ENCODE measurements at regions of chr2 and their contacts with region 1.

Region 1: DNA sequence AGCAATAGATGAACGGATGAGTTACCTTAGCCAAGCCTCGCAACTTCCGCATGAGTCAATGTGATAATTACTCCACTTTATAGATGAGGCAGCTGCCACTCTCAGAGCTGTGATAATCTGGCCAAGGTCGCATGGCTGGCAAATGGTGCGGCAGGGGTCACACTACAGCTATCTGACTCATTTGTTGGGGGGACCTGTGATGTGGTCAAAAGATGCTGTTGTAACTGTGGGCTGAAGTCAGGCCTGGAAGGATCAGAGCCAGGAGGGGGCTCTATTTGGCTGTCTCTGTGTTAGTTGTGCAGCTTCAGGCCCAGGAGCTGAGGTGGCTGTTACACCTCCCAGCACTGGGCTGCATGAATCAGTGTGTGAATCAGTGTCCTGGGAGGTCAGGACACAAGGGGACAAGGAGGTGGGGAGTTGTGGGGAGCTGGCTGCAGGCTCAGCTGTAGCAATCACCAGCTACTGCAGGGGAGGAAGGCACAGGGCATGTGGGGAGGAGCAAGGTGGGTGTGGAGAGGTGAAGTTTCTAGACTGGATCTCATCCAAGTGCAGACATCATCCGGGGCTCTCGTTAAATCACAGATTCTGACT is 33.1 kb downstream of the NGEF start:
- DNase-seq: peak; percentile 84
- ATAC-seq: peak; percentile 93
- H3K4me3 ChIP-seq: no peak overlapping the region
- H3K27ac ChIP-seq: peak overlapping the region; percentile 80
- H3K4me1 ChIP-seq: peaks cover 58% of the 10 kb centered on the region
- H3K27me3 ChIP-seq: no peaks in the 10 kb centered on the region
- CTCF ChIP-seq: no peak; the same call in 1 of the 2 replicates

Region 2: DNA sequence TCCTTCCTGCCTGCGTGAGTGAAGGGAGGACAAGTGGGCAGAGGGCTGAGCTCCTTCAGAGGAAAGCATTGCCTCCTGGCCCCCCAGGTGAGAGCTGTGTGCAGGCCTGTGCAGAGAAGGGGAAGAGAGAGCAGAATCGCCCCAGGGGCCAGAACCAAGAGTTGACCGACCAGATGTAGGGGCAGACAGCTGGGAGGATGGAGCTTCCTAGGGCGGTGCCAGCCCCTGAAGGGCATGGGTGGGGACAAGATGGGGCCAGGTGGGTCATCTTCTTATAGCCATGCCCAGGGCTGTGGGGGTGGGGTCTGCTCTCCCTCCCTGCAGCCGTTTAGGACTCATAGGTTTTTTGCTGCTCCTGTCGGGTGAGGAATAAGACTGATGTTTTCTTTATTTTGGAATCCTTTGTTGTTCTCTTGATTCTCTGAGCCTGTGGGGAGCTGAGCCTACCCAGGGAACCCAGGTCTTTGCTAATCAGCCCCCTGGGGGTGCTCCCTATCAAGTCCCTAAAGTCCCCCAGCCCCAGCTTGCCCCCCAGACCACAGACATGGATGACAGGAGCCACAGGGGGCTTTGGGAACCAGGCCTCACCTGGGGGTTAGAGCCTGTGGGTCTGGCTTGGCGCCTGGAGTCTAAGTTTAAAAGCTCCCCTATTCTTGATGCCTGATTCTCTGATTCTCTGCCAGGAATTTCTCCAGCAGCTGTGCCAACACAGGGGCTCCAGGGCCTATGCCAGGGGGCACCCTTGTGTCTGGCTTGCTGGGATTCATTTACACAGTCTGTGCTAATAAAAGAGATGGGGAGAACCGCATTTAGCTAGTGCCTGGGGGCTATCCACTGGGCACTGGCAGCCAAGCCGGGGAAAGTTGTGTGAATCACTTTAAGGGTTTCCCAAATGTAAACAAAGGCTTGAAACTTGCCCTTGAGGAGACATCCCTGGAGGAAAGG is 355.9 kb before region 1 on chr2:
- CTCF ChIA-PET with region 1: no interaction called
- POLR2A ChIA-PET with region 1: no interaction called
- in situ Hi-C with region 1: no loop called
- intact Hi-C with region 1: no loop called
- DNase-seq: no peak
- ATAC-seq: peak; percentile 87
- H3K4me3 ChIP-seq: no peak overlapping the region
- H3K27ac ChIP-seq: peak overlapping the region; percentile 52
- H3K4me1 ChIP-seq: peaks cover 23% of the 10 kb centered on the region
- H3K27me3 ChIP-seq: no peaks in the 10 kb centered on the region; the same call in 1 of the 2 replicates
- CTCF ChIP-seq: no peak

Region 3: DNA sequence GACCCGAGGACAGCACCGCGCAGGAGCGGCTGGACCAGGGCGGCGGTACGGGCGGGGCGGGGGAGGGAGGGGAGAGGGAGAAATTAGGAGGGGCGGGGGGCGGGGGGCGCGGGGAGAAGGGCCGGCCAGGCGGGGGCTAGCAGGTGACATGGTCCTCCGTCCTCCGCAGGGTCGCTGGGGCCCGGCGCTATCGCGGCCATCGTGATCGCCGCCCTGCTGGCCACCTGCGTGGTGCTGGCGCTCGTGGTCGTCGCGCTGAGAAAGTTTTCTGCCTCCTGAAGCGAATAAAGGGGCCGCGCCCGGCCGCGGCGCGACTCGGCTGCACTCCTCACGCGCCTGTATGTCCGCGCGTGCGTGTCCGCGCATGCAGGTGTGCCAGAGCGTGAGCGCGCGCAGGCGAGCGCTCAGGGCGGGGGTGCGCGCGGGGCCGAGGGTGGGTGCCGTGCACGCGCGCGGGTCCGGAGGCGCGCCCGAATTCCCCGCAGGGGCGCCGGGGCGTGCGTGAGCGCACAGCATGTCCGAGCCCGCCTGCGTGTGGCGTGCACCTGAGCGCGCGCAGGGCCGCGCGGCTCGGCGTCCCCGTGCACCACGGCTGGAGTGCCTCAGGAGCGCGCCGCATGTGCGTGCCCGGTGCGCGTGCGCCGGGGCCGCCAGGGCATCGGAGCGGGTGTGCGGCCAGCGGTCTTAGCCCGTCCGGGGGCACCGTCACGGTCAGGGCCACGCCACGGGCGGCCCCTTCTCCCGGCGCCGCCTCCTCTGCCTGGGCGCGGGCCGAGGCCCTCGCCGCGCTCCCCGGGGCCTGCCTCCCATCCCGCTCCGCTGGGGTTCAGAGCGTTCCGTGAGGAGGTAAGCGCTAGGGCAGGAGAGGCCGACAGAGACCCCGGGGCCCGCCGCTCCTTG is 103.6 kb before region 1 on chr2:
- CTCF ChIA-PET with region 1: no interaction called
- POLR2A ChIA-PET with region 1: no interaction called
- in situ Hi-C with region 1: no loop called
- intact Hi-C with region 1: no loop called
- DNase-seq: no peak
- ATAC-seq: peak; percentile 81
- H3K4me3 ChIP-seq: peak overlapping the region; percentile 51 to 67
- H3K27ac ChIP-seq: peak overlapping the region; percentile 78
- H3K4me1 ChIP-seq: peaks cover 30% of the 10 kb centered on the region
- H3K27me3 ChIP-seq: no peaks in the 10 kb centered on the region
- CTCF ChIP-seq: no peak; the same call in 1 of the 2 replicates

Region 4: GRCh38 chr2:232942831-232943230 is 37.1 kb before region 1 on chr2:
- CTCF ChIA-PET with region 1: no interaction called
- POLR2A ChIA-PET with region 1: no interaction called
- in situ Hi-C with region 1: no loop called
- intact Hi-C with region 1: no loop called
- DNase-seq: no peak
- ATAC-seq: no peak
- H3K4me3 ChIP-seq: no peak overlapping the region
- H3K27ac ChIP-seq: no peak overlapping the region
- H3K4me1 ChIP-seq: no peaks in the 10 kb centered on the region
- H3K27me3 ChIP-seq: no peaks in the 10 kb centered on the region
- CTCF ChIP-seq: no peak

Region 5: DNA sequence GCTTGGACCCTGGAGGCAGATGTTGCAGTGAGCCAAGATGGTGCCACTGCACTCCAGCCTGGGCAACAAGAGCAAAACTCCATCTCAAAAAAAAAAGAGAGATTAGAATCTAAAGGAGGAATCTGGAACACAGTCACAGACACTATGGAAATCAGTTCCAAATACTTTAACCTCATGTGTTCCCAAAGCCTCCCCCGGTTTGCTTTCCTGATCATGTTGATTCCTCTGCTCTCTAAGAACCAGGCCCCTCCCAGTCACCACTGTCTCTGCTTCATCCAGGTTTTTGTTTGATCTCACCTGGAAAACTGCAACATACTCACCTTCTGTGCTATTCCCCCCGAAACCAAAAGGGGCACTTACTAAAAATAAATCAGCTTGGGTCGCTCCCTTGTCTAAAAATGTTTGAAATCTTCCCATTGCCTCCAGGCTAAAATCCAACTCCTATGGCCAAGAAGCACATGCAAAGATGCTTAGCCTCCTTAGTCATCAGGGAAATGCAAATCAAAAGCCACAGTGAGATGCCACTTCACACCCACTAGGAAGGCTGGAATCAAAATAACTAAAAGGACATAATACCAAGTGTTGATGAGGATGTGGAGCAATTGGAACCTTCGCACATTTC is 46.3 kb after region 1 on chr2:
- CTCF ChIA-PET with region 1: interaction called, 9 read pairs
- POLR2A ChIA-PET with region 1: no interaction called
- in situ Hi-C with region 1: no loop called
- intact Hi-C with region 1: loop called (anchors 5 kb)
- DNase-seq: no peak
- ATAC-seq: no peak
- H3K4me3 ChIP-seq: no peak overlapping the region
- H3K27ac ChIP-seq: peak overlapping the region; percentile 41; the same call in 1 of the 2 replicates
- H3K4me1 ChIP-seq: peaks cover 8% of the 10 kb centered on the region
- H3K27me3 ChIP-seq: no peaks in the 10 kb centered on the region
- CTCF ChIP-seq: no peak

Region 6: GRCh38 chr2:233037078-233037477 is 57.1 kb after region 1 on chr2:
- CTCF ChIA-PET with region 1: no interaction called
- POLR2A ChIA-PET with region 1: no interaction called
- in situ Hi-C with region 1: no loop called
- intact Hi-C with region 1: no loop called
- DNase-seq: no peak
- ATAC-seq: no peak
- H3K4me3 ChIP-seq: no peak overlapping the region
- H3K27ac ChIP-seq: no peak overlapping the region
- H3K4me1 ChIP-seq: no peaks in the 10 kb centered on the region
- H3K27me3 ChIP-seq: no peaks in the 10 kb centered on the region
- CTCF ChIP-seq: no peak

Region 7: DNA sequence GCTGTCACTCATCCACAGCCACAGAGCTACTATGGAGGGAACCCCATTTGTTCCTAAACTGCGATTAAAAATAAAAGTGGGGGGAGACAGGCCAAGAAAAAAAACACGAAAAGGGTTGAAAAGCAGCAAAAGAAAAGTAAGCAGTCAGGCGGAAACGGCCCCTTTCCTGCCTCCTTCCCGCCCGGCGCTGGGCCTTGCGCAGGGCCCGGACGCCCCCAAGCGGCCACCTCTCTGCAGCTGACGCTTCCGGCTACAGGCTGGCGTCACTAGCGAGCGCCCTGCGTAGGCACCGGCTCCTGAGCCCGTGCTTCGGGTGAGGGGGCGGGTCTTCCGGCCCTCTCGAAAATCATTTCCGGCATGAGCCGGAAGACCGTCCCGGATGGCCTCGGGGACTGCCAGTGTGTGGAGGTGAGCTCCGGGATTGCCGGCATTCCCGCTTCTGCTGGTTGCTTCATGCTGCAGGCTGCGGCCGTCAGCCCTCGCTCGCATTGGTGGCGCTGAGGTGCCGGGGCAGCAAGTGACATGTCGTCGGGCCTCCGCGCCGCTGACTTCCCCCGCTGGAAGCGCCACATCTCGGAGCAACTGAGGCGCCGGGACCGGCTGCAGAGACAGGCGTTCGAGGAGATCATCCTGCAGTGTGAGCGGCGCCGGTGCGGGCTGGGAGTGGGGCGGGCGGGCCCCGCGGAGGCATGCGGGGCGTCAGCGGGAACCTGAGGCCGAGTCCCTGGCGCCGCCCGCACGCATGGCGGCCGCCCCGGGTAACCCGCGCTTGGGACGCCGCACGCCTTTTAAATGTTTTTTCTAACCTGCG is 271.5 kb after region 1 on chr2 and contains the start of gene ATG16L1:
- CTCF ChIA-PET with region 1: no interaction called
- POLR2A ChIA-PET with region 1: no interaction called
- in situ Hi-C with region 1: no loop called
- intact Hi-C with region 1: loop called (anchors 5 kb)
- DNase-seq: peak; percentile 69
- ATAC-seq: peak; percentile 99
- H3K4me3 ChIP-seq: peak within 1 kb of the TSS; percentile 55 to 98
- H3K27ac ChIP-seq: peak within 1 kb of the TSS; percentile 94
- H3K4me1 ChIP-seq: peaks cover 32% of the 10 kb centered on the region
- H3K27me3 ChIP-seq: no peaks in the 10 kb centered on the region
- CTCF ChIP-seq: peak; percentile 99
- total RNA-seq, gene ATG16L1: 52.3 TPM